Colonic mucosa (tissue), 4 donors: ENCODE measurements at regions of chr7 and their contacts with region 1.

Region 1: DNA sequence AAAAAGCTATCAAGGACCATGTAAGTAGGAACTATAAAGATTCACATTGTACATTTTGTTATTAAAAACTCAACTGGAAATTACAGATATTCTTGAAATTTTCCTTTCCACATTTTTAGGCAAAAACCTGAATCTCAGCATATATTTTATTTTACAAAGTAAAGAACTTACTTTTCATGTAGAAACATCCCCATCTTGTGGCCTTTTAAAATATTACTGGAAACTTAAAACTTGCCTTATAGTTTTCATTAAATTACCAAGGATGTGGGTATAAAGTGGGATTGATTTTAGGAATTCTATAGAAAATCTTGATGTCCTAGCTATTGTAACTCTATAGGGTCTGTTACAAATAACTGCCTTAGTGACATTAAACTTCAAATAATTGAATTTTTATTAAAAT is 10.6 kb downstream of the DBF4 start:
- DNase-seq: no peak
- H3K4me3 ChIP-seq: no peak overlapping the region
- H3K27ac ChIP-seq: no peak overlapping the region
- H3K4me1 ChIP-seq: no peaks in the 10 kb centered on the region
- H3K27me3 ChIP-seq: no peaks in the 10 kb centered on the region
- CTCF ChIP-seq: peak; percentile 44

Region 2: GRCh38 chr7:87404674-87405073 is 482.2 kb before region 1 on chr7:
- intact Hi-C with region 1: no loop called
- DNase-seq: no peak
- H3K4me3 ChIP-seq: no peak overlapping the region
- H3K27ac ChIP-seq: no peak overlapping the region
- H3K4me1 ChIP-seq: no peaks in the 10 kb centered on the region
- H3K27me3 ChIP-seq: no peaks in the 10 kb centered on the region
- CTCF ChIP-seq: no peak

Region 3: DNA sequence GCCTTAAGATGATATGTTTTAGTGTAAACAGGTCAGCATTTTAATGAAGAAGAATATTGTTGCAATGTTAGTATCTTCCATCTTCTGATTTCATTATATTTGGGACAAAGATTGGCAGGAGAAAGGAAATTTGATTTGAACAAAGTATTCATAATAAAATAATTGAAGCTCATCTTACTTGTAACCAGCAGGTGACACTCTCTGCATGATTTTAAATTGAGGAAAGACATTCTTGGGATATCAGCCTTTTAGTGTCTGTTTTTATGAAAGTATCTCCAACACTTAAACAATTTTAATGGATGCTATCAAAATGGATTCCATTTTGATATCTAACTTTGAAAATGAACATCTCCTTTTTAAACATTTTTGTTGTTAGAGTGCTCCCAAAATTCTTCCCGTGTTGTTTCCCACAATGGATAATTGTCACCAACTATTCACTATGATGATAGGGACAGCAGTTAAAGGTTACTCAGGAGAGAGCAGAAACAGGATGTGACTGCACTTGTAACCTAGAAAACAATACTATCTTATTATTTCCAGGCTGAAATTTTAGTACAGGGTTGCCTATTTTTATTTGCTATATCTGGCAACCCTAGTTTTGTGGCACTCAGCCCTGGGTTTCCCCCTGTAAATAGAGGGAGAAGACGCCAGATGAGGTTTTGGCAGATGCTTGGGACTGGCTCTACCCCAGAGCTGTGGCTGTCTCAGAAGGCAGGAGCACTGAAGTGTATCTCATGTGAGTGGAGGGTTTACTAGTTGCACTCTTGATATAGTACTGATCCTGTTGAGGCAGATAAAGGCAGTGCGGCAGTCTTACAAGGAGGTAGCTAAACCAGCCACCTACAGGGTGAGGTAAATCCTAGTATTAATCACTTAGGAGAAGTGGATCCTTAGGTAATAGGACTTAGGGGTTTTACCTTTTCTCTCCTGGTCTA is 380.4 kb before region 1 on chr7:
- intact Hi-C with region 1: loop called (anchors 5 kb)
- DNase-seq: no peak
- H3K4me3 ChIP-seq: no peak overlapping the region
- H3K27ac ChIP-seq: no peak overlapping the region
- H3K4me1 ChIP-seq: no peaks in the 10 kb centered on the region
- H3K27me3 ChIP-seq: no peaks in the 10 kb centered on the region
- CTCF ChIP-seq: peak; percentile 25

Region 4: GRCh38 chr7:87797798-87798403 is 89.0 kb before region 1 on chr7:
- intact Hi-C with region 1: loop called (anchors 5 kb)
- DNase-seq: no peak
- H3K4me3 ChIP-seq: no peak overlapping the region
- H3K27ac ChIP-seq: no peak overlapping the region
- H3K4me1 ChIP-seq: no peaks in the 10 kb centered on the region
- H3K27me3 ChIP-seq: no peaks in the 10 kb centered on the region
- CTCF ChIP-seq: peak; percentile 51